Panc1 (cell line): ENCODE measurements at regions of chr5 and their contacts with region 1.

Region 1: GRCh38 chr5:79837761-79838605 is 148.3 kb downstream of the CMYA5 start:
- DNase-seq: no peak
- ATAC-seq: no peak
- H3K4me3 ChIP-seq: no peak overlapping the region
- H3K27ac ChIP-seq: no peak overlapping the region
- H3K4me1 ChIP-seq: no peaks in the 10 kb centered on the region
- H3K27me3 ChIP-seq: peaks cover 4% of the 10 kb centered on the region; the same call in 1 of the 2 replicates
- CTCF ChIP-seq: no peak

Region 2: DNA sequence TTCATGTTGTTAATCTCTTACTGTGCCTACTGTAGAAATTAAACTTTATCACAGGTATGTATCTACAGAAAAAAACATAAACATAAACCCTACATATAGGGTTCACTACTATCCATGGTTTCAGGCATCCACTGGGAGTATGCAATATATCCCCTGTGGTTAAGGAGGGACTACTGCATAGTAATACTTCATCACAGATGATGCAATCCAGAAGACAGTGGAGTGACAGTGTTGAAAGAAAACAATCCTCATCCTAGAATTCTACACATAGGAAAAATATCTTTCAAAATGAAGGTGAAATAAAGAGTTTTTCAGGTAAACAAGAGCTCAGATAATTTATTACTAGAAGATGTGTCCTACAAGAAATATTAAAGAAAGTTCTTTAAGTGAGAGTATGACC is 430.0 kb before region 1 on chr5:
- CTCF ChIA-PET with region 1: no interaction called
- POLR2A ChIA-PET with region 1: no interaction called
- in situ Hi-C with region 1: no loop called
- intact Hi-C with region 1: no loop called
- DNase-seq: no peak
- ATAC-seq: no peak
- H3K4me3 ChIP-seq: no peak overlapping the region
- H3K27ac ChIP-seq: no peak overlapping the region
- H3K4me1 ChIP-seq: no peaks in the 10 kb centered on the region
- H3K27me3 ChIP-seq: no peaks in the 10 kb centered on the region
- CTCF ChIP-seq: no peak

Region 3: GRCh38 chr5:79552984-79553383 is 285.0 kb before region 1 on chr5:
- CTCF ChIA-PET with region 1: interaction called, 10 read pairs
- POLR2A ChIA-PET with region 1: no interaction called
- in situ Hi-C with region 1: no loop called
- intact Hi-C with region 1: no loop called
- DNase-seq: no peak
- ATAC-seq: no peak
- H3K4me3 ChIP-seq: no peak overlapping the region
- H3K27ac ChIP-seq: no peak overlapping the region
- H3K4me1 ChIP-seq: no peaks in the 10 kb centered on the region
- H3K27me3 ChIP-seq: no peaks in the 10 kb centered on the region; the same call in 1 of the 2 replicates
- CTCF ChIP-seq: no peak

Region 4: DNA sequence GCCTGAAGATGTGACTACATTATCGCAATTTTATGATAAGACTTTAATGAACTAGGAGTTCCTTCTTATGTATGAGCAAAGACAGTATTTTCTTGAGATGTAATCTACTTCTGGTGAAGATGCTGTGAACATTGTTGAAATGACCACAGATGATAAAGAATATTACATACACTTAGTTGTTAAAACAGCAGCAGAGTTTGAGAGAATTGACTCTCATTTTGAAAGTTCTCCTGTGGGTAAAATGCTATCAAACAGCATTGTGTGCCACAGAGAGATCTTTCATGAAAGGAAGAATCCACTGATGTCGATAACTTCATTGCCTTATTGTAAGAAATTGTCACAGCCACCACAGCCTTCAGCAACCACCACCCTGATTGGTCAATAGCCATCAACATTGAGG is 657.9 kb after region 1 on chr5:
- CTCF ChIA-PET with region 1: no interaction called
- POLR2A ChIA-PET with region 1: interaction called, 27 read pairs
- in situ Hi-C with region 1: no loop called
- intact Hi-C with region 1: no loop called
- DNase-seq: no peak
- ATAC-seq: no peak
- H3K4me3 ChIP-seq: no peak overlapping the region
- H3K27ac ChIP-seq: no peak overlapping the region
- H3K4me1 ChIP-seq: no peaks in the 10 kb centered on the region
- H3K27me3 ChIP-seq: no peaks in the 10 kb centered on the region
- CTCF ChIP-seq: no peak